Activated T-helper 1 cell treated with anti-CD3 and anti-CD28 coated beads, Interleukin-12 subunit alpha, Interleukin-12 subunit beta, Interleukin-2, Interleukin-4 antibody, amounts not matched to agents 30 ng/mL and 10 ng/mL and 1 ng/mL, durations not matched to agents 14 hours and 24 hours and 36 hours (primary cell): ENCODE measurements at regions of chr7 and their contacts with region 1.

Region 1: DNA sequence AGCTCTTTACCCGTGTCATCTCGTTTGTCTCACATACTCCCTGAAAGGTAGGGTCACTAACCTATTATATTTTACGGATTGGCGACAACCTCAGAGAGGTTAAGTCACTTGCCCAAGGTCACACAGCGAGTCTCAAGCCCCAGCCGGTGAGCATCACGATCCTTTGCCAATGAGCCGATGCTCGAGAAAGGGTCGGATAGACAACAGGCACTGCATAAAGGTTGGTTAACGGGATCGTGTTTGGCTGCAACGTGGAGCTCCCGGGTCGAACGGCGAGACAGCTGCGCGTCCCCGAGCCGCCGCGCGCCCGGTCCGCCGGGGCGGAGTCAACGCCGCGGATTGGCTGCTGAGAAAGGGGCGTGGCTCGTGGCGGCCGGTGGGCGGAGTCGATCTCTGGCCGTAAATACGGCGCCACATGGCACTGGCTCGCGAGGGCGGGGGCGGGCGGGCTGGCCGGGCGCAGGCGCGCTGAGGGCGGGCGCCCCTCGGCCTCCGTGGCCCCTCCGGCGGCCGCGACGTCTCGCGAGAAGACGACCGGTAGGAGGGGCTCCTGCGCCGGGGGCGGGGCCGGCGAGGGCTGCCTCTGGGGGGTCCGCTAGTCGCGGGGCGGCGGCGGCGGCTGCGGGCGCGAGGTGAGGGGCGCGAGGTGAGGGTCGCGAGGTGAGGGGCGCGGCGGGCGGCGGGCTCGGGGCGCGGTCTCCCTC is at the start of gene CHST12:
- DNase-seq: peak; percentile 94
- H3K4me3 Mint-ChIP-seq: peak within 1 kb of the TSS; percentile 90
- H3K27ac Mint-ChIP-seq: peak within 1 kb of the TSS; percentile 78
- H3K4me1 Mint-ChIP-seq: peaks cover 51% of the 10 kb centered on the region
- H3K27me3 Mint-ChIP-seq: no peaks in the 10 kb centered on the region
- total RNA-seq, gene CHST12: 9.9 and 10.6 TPM in 2 replicates

Region 2: DNA sequence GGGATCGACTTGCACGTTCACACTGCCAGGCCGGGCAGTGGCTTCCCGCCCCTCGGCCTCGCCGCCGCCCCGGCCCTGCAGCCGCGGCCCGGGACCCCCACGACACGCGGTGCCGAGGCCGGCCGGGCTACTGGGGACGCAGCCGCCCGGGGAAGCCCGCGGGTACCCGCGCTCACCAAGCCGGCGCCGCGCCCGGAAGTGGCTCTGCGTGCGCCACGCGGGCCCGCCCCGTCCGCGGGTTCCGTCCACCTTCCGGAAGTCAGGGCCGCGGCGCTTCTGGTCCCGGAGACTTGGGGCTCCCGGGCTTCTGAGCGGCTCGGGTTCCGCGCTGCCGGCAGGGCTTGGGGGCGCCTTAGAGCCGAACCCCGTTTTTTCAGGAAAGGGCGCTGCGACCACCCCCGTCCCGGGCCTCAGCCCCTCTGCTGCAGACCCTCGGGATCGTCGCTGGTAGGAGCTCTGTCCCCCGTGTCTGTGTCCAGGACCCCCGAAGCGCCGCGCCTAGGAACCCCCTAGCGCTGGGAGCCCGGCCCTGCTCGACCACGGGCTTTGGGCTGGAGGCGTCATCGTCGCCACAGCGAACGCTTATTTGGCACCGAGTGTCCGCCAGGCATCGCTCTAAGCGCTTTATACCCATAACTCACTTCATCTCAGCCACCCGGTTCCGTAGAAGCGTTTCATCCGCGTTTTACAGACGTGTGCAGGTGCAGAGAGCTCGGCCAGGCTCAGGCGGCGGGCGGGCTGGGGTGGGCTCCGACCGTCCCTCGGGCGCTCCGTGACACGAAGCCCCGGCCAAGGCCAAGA is 833.1 kb before region 1 on chr7 and contains the start of gene PSMG3:
- intact Hi-C with region 1: loop called (anchors 1 kb)
- DNase-seq: peak; percentile 86
- H3K4me3 Mint-ChIP-seq: peak within 1 kb of the TSS; percentile 89
- H3K27ac Mint-ChIP-seq: peak within 1 kb of the TSS; percentile 81
- H3K4me1 Mint-ChIP-seq: peaks cover 31% of the 10 kb centered on the region
- H3K27me3 Mint-ChIP-seq: no peaks in the 10 kb centered on the region
- total RNA-seq, gene PSMG3: 55.7 and 56.0 TPM in 2 replicates

Region 3: DNA sequence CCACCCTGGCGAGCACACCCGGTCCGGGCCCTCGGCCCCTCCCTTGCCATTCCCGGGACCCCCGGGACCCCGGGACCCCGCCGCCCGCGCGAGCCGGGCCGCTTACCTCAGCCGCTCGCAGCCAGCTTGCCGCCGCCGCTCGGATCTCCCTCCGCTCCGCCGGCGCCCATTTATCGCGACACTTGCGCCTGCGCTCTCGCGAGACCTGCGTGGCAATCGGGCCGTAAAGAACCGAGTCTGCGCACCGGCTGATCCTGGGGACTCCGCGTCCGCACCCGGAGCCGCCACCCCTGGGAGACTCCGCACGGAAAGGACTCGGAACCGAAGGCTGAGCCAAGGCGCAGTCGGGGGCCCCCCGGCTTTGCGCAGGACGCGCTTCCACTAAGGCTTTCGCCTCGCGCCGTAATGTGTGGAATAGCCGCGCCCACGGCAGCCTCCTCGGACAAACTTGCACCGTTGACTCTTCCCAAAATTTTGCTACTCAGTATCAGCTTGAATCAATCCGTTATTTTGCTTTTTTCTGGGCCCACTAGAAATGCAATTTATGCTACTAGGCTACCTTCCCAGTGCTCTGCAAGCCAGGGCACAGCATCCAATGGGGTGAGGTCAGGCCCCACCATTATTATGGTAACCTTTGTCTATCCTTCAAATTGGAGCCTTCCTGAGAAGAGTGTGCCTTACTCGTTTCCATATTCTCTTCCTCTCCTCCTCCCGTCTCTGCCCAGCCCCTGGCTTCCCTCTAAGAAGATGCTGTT is 170.2 kb before region 1 on chr7 and contains the start of gene MAD1L1:
- intact Hi-C with region 1: loop called (anchors 1 kb)
- DNase-seq: peak; percentile 88
- H3K4me3 Mint-ChIP-seq: peak within 1 kb of the TSS; percentile 96
- H3K27ac Mint-ChIP-seq: peak within 1 kb of the TSS; percentile 83
- H3K4me1 Mint-ChIP-seq: peaks cover 26% of the 10 kb centered on the region
- H3K27me3 Mint-ChIP-seq: no peaks in the 10 kb centered on the region
- total RNA-seq, gene MAD1L1: 56.2 and 56.4 TPM in 2 replicates

Region 4: DNA sequence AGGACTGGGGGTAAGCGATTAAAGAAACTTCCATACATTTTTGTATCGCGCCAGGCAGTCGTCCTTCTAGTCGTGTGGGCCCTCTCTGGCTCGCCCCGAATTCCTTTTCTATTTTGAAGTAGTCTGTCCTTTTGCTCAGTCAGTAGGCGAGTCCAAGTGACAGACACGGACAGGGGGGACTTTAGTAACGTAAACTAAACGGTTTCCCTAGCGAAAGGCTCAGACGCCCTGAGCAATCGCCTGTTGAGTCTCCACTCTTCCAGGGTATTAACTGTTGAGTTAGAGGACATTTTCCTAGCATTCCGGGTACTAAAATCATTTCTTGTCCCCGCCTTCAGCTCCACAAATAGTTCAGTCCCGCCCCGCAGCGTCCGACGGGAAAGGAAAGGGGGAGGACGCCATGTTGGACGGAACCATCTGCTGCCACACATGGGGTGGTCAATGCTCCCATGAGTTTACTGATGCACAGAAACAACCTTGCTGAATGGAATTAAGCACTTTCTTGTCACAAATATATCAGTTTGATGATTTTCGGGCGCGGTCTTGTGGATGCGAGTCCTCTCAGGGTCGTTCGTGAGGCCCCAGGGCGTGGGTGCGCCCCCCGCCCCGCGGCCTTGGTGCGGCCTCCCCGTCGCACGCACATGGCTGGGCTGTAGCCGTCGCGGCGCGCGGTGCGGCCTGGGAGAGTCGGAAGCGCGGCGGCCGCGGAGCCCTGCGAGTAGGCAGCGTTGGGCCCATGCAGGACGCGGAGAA is 48.8 kb before region 1 on chr7 and contains the start of gene EIF3B:
- intact Hi-C with region 1: loop called (anchors 1 kb)
- DNase-seq: peak; percentile 85
- H3K4me3 Mint-ChIP-seq: peak within 1 kb of the TSS; percentile 92
- H3K27ac Mint-ChIP-seq: peak within 1 kb of the TSS; percentile 100
- H3K4me1 Mint-ChIP-seq: peaks cover 21% of the 10 kb centered on the region
- H3K27me3 Mint-ChIP-seq: no peaks in the 10 kb centered on the region
- total RNA-seq, gene EIF3B: 269 and 270 TPM in 2 replicates

Region 5: DNA sequence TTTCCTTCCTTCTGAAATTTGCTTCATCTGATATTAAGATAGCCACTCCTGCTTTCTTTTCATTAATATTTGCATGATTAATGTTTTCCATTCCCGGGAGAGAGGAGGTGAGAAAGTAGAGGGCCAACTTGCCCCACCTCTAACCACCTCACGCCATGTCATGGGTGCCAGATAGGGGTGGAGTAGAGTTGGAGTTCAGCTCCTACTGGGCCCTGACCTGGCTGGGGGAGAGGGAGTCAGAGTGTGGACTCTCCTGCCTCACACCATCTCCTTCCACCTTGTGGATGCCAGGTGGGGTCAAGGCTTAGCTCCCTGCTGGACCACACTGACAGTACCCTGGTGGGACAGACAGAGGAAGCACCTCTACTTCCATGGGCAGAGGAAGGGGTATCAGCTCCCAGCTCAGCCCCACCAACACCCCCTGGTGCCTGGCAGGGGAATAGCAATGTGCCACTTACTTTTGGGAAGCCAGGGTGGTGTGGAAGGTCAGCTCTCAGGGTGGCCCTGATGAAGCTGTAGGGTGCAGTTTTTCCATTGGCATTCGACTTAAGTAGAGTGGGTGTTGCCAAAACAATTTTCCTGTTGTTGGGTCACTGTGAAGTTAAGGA is 28.2 kb after region 1 on chr7:
- intact Hi-C with region 1: loop called (anchors 2 kb)
- DNase-seq: peak; percentile 20
- H3K4me3 Mint-ChIP-seq: no peak overlapping the region
- H3K27ac Mint-ChIP-seq: no peak overlapping the region
- H3K4me1 Mint-ChIP-seq: peaks cover 16% of the 10 kb centered on the region
- H3K27me3 Mint-ChIP-seq: no peaks in the 10 kb centered on the region

Region 6: GRCh38 chr7:2632733-2633537 is 229.8 kb after region 1 on chr7:
- intact Hi-C with region 1: loop called (anchors 1 kb)
- DNase-seq: peak; percentile 24
- H3K4me3 Mint-ChIP-seq: peak overlapping the region; percentile 91
- H3K27ac Mint-ChIP-seq: peak overlapping the region; percentile 81
- H3K4me1 Mint-ChIP-seq: peaks cover 15% of the 10 kb centered on the region
- H3K27me3 Mint-ChIP-seq: no peaks in the 10 kb centered on the region